ENCODE measurements at regions of chr16 and their contacts with region 1.

Region 1: GRCh38 chr16:67521095-67521804 is 7.4 kb upstream of the RIPOR1 start:
- DNase-seq: peak; percentile 85 to 99 (median 95)
- ATAC-seq: peak; percentile 86 to 94 (median 90)
- H3K4me3 ChIP-seq: peak overlapping the region; percentile 64
- H3K4me3 Mint-ChIP-seq: peak overlapping the region; percentile 86 to 96 (median 86)
- H3K27ac ChIP-seq: peak overlapping the region; percentile 97
- H3K27ac Mint-ChIP-seq: peak overlapping the region; percentile 95 to 96
- H3K4me1 ChIP-seq: peaks cover 0 to 37% of the 10 kb centered on the region in 2 experiments
- H3K4me1 Mint-ChIP-seq: peaks cover 18 to 37% (median 35%) of the 10 kb centered on the region in 3 donors
- H3K27me3 ChIP-seq: no peaks in the 10 kb centered on the region
- H3K27me3 Mint-ChIP-seq: no peaks in the 10 kb centered on the region

Region 2: DNA sequence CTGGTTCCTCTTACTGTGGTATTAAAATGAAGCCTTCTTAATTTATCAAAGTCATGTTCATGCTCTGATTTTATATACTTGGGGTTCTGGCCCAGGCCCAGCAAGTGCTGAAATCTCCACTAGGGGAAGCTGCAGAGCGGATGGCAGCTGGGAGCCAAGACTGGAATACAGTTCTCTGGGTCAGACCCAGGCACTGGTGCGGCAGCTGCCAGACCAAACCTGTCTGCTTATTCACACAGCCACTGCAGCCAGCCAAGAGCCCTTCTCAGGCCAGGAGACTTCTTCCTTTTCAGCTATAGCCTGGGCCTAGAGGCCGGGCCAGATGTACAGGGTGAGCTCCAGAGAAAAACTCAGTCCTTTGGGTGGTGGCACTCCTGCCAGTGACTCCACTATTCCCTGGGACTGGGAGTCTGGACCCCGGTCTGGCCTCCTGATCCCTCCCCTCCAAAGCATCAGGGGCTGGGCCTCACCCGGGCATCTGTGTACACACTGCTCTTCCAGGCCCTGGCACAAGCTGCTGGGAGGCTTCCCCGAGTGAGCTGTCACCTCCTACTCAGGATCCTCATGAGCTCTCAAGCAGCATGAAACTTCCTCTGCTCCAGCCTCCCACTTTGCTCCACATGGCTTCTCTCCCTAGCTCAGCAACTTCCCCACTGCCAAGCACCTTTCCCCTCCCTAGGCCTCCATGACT is 64.7 kb before region 1 on chr16:
- CTCF ChIA-PET with region 1: no interaction called
- POLR2A ChIA-PET with region 1: no interaction called
- DNase-seq: no peak
- ATAC-seq: no peak
- H3K4me3 ChIP-seq: no peak overlapping the region
- H3K4me3 Mint-ChIP-seq: no peak overlapping the region
- H3K27ac ChIP-seq: no peak overlapping the region
- H3K27ac Mint-ChIP-seq: no peak overlapping the region
- H3K4me1 ChIP-seq: peaks cover 0 to 34% of the 10 kb centered on the region in 2 experiments
- H3K4me1 Mint-ChIP-seq: peaks cover 17 to 45% (median 32%) of the 10 kb centered on the region in 3 donors
- H3K27me3 ChIP-seq: no peaks in the 10 kb centered on the region
- H3K27me3 Mint-ChIP-seq: no peaks in the 10 kb centered on the region

Region 3: GRCh38 chr16:67537270-67537635 is 16.0 kb after region 1 on chr16:
- CTCF ChIA-PET with region 1: interaction called, 11 to 21 read pairs
- POLR2A ChIA-PET with region 1: no interaction called
- DNase-seq: peak in 14 of 35 experiments; percentile 20 to 69 (median 34)
- ATAC-seq: peak; percentile 48 to 58 (median 55)
- H3K4me3 ChIP-seq: peak overlapping the region; percentile 61 to 94
- H3K4me3 Mint-ChIP-seq: peak overlapping the region; percentile 73 to 86 (median 78)
- H3K27ac ChIP-seq: peak overlapping the region; percentile 84
- H3K27ac Mint-ChIP-seq: peak overlapping the region; percentile 78 to 86
- H3K4me1 ChIP-seq: peaks cover 0 to 36% of the 10 kb centered on the region in 2 experiments
- H3K4me1 Mint-ChIP-seq: peaks cover 33 to 62% (median 53%) of the 10 kb centered on the region in 3 donors
- H3K27me3 ChIP-seq: peaks cover 0 to 5% of the 10 kb centered on the region in 2 experiments
- H3K27me3 Mint-ChIP-seq: no peaks in the 10 kb centered on the region

Region 4: GRCh38 chr16:67561824-67562525 is 40.7 kb after region 1 on chr16:
- CTCF ChIA-PET with region 1: interaction called in 1 of 2 experiments, 26 read pairs
- POLR2A ChIA-PET with region 1: interaction called, 3 to 4 read pairs
- DNase-seq: peak; percentile 92 to 98 (median 96)
- ATAC-seq: peak; percentile 74 to 81 (median 76)
- H3K4me3 ChIP-seq: peak overlapping the region; percentile 55 to 67
- H3K4me3 Mint-ChIP-seq: peak overlapping the region; percentile 85 to 88 (median 86)
- H3K27ac ChIP-seq: peak overlapping the region; percentile 69
- H3K27ac Mint-ChIP-seq: peak overlapping the region; percentile 92 to 94
- H3K4me1 ChIP-seq: peaks cover 21 to 47% of the 10 kb centered on the region in 2 experiments
- H3K4me1 Mint-ChIP-seq: peaks cover 38 to 60% (median 45%) of the 10 kb centered on the region in 3 donors
- H3K27me3 ChIP-seq: no peaks in the 10 kb centered on the region
- H3K27me3 Mint-ChIP-seq: no peaks in the 10 kb centered on the region

Region 5: DNA sequence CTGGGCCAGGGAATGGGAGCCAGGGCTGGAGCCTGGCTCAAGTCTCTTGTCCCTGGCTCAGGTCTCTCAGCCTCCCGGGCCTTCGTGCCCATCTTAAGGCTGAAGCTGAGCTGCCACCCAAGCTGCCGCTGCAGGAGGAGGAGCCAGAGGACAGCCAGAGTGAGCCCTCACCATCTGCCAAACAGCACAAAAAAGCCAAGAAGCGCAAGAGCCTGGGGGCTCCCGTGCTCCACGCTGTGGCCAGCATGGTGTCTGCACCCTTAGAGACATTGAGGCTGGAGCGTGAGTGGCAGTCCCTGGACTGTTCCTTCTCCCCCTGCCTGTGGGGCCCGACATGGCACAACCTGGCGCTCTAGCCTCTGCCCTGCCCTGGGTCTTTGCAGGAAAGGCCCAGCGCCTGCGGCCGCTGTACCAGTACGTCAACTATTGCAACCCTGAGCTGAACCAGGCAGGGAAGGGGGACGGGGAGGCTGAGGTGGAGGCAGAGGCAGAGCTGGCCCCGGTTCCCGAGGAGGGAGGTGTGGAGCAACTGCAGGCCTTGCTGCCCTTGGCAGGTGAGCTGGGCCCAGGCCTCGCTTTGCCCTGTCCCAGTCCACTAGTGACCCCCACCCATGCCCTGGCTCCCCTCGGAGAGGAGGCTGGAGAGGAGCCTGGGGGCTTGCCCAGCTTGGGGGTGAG is 146.7 kb after region 1 on chr16:
- CTCF ChIA-PET with region 1: interaction called, 11 to 15 read pairs
- POLR2A ChIA-PET with region 1: interaction called in 1 of 2 experiments, 4 read pairs
- DNase-seq: peak; percentile 62 to 89 (median 80)
- ATAC-seq: peak; percentile 86 to 90 (median 87)
- H3K4me3 ChIP-seq: peak overlapping the region; percentile 63 to 64
- H3K4me3 Mint-ChIP-seq: peak overlapping the region; percentile 79 to 87 (median 84)
- H3K27ac ChIP-seq: peak overlapping the region; percentile 43
- H3K27ac Mint-ChIP-seq: peak overlapping the region; percentile 63 to 72
- H3K4me1 ChIP-seq: peaks cover 5 to 26% of the 10 kb centered on the region in 2 experiments
- H3K4me1 Mint-ChIP-seq: peaks cover 11 to 36% (median 22%) of the 10 kb centered on the region in 3 donors
- H3K27me3 ChIP-seq: no peaks in the 10 kb centered on the region
- H3K27me3 Mint-ChIP-seq: no peaks in the 10 kb centered on the region

Measured in T-cell (primary cell).